ENCODE measurements at regions of chr14 and their contacts with region 1.

Region 1: GRCh38 chr14:102694530-102695166 is 82.6 kb upstream of the TRAF3 start:
- DNase-seq: peak in 3 of 5 donors; percentile 42 to 48 (median 42)
- ATAC-seq: peak; percentile 47 to 77 (median 74)
- H3K4me3 ChIP-seq: no peak overlapping the region
- H3K27ac ChIP-seq: no peak overlapping the region
- H3K4me1 ChIP-seq: peaks cover 0 to 41% (median 15%) of the 10 kb centered on the region in 12 donors
- H3K27me3 ChIP-seq: no peaks in the 10 kb centered on the region
- CTCF ChIP-seq: peak; percentile 69 to 81 (median 76)
- POLR2A ChIP-seq: no peak

Region 2: DNA sequence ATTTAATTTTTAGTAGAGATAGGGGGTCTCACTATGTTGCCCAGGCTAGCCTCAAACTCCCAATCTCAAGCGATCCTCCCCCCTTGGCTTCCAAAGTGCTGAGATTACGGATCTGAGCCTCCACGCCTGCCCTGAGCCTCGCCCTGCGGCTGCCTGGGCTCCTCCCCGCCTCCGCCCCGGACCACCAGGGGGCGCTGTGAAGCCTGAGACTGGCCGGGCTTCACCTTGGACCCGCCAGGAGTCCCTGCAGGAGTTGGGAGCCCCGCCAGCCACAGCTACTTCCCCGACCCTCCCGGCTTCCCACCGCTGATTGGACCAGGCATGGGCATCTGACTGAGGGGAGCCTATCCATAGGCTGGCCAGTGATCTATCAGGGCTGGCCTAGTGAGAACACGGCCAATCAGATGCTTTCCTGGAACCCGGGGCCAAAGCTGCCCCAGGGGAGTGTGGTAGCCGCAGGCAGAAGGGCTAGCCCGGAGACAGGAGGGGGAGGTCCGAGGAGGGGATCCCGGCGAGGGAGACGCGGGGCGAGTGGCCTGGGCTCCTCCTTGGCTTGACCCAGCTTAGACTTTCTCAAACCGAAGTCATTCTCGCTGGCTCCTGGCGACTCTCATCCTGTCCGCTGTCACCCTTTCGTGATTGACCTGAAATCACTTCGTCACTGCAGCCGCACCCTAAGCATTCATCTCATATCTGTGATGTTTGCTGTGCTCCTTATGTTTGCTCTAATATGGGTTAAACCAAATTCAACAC is 170.0 kb before region 1 on chr14:
- intact Hi-C with region 1: loop called in 6 of 10 experiments (anchors 5 to 10 kb)
- DNase-seq: peak; percentile 99 to 100 (median 100)
- ATAC-seq: peak; percentile 97 to 99 (median 99)
- H3K4me3 ChIP-seq: peak overlapping the region; percentile 38 to 73 (median 63)
- H3K27ac ChIP-seq: peak overlapping the region; percentile 63 to 89 (median 81)
- H3K4me1 ChIP-seq: peaks cover 0 to 28% (median 8%) of the 10 kb centered on the region in 12 donors
- H3K27me3 ChIP-seq: no peaks in the 10 kb centered on the region
- CTCF ChIP-seq: peak; percentile 97 to 100 (median 99)
- POLR2A ChIP-seq: peak in 1 of 2 donors; percentile 70

Region 3: GRCh38 chr14:102774391-102775153 is 79.9 kb after region 1 on chr14:
- intact Hi-C with region 1: loop called in 2 of 10 experiments (anchors 5 to 10 kb)
- DNase-seq: peak in 2 of 5 donors; percentile 35 to 40
- ATAC-seq: peak in 3 of 4 donors; percentile 56 to 76 (median 62)
- H3K4me3 ChIP-seq: no peak overlapping the region
- H3K27ac ChIP-seq: no peak overlapping the region
- H3K4me1 ChIP-seq: peaks cover 0 to 31% (median 8%) of the 10 kb centered on the region in 12 donors
- H3K27me3 ChIP-seq: peaks cover 0 to 7% (median 0%) of the 10 kb centered on the region in 9 donors
- CTCF ChIP-seq: peak; percentile 44 to 74 (median 60)
- POLR2A ChIP-seq: no peak

Region 4: GRCh38 chr14:103078093-103078749 is 383.6 kb after region 1 on chr14:
- intact Hi-C with region 1: loop called in 2 of 10 experiments (anchors 5 to 10 kb)
- DNase-seq: peak; percentile 76 to 89 (median 77)
- ATAC-seq: peak in 3 of 4 donors; percentile 30 to 34 (median 33)
- H3K4me3 ChIP-seq: no peak overlapping the region
- H3K27ac ChIP-seq: no peak overlapping the region
- H3K4me1 ChIP-seq: peaks cover 3 to 27% (median 20%) of the 10 kb centered on the region in 12 donors
- H3K27me3 ChIP-seq: peaks cover 0 to 9% (median 0%) of the 10 kb centered on the region in 9 donors
- CTCF ChIP-seq: peak; percentile 52 to 75 (median 67)
- POLR2A ChIP-seq: no peak

Region 5: DNA sequence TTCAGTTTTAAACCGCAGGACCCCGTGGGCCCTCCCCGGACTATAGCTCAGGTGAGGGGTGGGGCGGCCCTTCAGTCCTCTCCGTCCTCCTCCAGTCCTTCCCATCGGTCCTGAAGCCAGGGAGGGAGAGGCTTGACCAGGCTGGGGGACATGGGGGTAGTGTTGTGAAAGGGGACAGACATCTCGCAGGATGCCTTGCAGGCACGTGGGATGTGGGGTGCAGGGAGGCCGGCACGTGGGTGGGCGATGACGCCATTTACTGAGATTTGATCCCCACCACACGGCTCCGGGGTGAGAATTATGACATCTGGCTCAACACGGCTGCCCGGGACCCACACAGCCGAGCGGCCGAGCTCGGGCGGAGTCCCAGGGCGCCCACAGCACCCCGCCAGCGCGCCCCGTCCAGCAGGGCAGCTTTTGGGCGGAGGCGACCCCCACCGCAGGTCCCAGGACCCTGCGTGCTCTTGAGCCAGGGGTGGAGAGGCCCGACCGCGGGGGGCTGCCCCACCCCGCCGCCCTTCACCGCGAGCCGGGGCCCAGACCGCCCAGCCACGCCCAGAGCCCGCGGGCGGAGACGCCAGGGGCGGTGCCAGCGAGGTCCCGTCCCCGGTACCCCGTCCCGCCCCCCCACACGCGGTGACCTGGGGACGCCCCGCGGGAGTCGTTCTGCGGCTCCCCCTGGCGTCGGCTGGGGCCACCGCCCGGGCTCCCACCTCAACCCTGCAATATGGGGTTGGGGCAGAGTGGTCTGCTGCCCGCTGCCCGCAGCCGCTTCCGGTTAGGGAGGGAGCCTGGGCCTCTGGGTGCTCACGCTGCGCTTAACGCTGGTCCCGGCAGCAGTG is 396.6 kb after region 1 on chr14:
- intact Hi-C with region 1: loop called in 3 of 10 experiments (anchors 10 kb)
- DNase-seq: peak in 4 of 5 donors; percentile 48 to 76 (median 67)
- ATAC-seq: peak; percentile 7 to 80 (median 64)
- H3K4me3 ChIP-seq: peak overlapping the region; percentile 23 to 62 (median 52)
- H3K27ac ChIP-seq: peak overlapping the region in 3 of 12 donors; percentile 2 to 30 (median 14)
- H3K4me1 ChIP-seq: peaks cover 0 to 32% (median 6%) of the 10 kb centered on the region in 12 donors
- H3K27me3 ChIP-seq: peaks cover 0 to 25% (median 0%) of the 10 kb centered on the region in 9 donors
- CTCF ChIP-seq: peak; percentile 28 to 65 (median 52)
- POLR2A ChIP-seq: no peak